Activated B cell treated with CpG ODN at 0.5 μM for 24 hours (primary cell): ENCODE measurements at regions of chr11 and their contacts with region 1.

Region 1: GRCh38 chr11:7442588-7443215 is 42.6 kb upstream of the OLFML1 start:
- DNase-seq: peak; percentile 67
- ATAC-seq: peak; percentile 100
- H3K4me3 Mint-ChIP-seq: no peak overlapping the region
- H3K27ac Mint-ChIP-seq: no peak overlapping the region
- H3K4me1 Mint-ChIP-seq: no peaks in the 10 kb centered on the region
- H3K27me3 Mint-ChIP-seq: no peaks in the 10 kb centered on the region
- CTCF ChIP-seq: peak; percentile 42

Region 2: GRCh38 chr11:6812390-6813005 is 630.2 kb before region 1 on chr11:
- CTCF ChIA-PET with region 1: interaction called, 5 read pairs
- POLR2A ChIA-PET with region 1: no interaction called
- intact Hi-C with region 1: loop called (anchors 1 kb)
- DNase-seq: no peak
- ATAC-seq: peak; percentile 85
- H3K4me3 Mint-ChIP-seq: no peak overlapping the region
- H3K27ac Mint-ChIP-seq: no peak overlapping the region
- H3K4me1 Mint-ChIP-seq: peaks cover 4% of the 10 kb centered on the region
- H3K27me3 Mint-ChIP-seq: peaks cover 9% of the 10 kb centered on the region
- CTCF ChIP-seq: peak; percentile 95

Region 3: DNA sequence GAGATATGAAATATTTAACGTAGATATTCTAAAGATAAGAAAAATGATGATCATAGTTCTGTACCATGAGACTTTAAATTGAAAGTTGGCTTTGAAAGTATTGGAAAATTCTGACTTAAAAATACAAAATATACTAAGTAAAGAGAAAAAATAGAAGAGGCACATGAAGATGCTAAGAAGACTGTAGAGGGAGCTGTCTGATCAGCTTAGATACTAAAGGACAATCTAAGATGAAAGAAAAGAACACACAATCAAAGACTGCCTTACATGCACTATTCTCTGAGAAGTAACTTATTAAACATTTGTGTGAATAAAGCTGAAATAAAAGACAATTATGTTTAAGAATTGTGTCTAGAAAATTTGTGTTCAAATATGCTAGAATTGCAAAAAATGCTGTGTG is 298.8 kb before region 1 on chr11:
- CTCF ChIA-PET with region 1: no interaction called
- POLR2A ChIA-PET with region 1: no interaction called
- intact Hi-C with region 1: loop called (anchors 1 kb)
- DNase-seq: no peak
- ATAC-seq: no peak
- H3K4me3 Mint-ChIP-seq: no peak overlapping the region
- H3K27ac Mint-ChIP-seq: no peak overlapping the region
- H3K4me1 Mint-ChIP-seq: no peaks in the 10 kb centered on the region
- H3K27me3 Mint-ChIP-seq: peaks cover 12% of the 10 kb centered on the region
- CTCF ChIP-seq: no peak

Region 4: DNA sequence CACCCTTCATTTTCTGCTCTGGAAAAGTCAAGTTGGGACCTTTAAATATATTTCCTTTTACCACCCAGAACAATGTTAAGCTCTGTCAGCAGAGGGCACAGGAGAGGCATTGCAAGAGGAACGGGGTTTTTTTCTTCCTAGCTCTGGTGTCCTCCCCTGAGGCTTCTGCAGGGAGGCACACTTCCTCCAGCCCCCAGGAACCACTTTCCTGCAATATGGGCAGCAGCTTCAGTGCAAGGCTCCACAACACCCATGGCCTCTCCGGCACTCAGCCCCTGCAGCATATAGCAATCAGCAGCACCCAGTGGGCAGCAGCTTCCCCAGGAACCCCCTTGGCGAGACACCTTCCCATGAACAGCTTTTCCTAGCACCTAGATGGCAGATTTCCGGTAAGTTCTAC is 89.6 kb before region 1 on chr11:
- CTCF ChIA-PET with region 1: interaction called, 100 read pairs
- POLR2A ChIA-PET with region 1: no interaction called
- intact Hi-C with region 1: loop called (anchors 1 kb)
- DNase-seq: peak; percentile 23
- ATAC-seq: peak; percentile 62
- H3K4me3 Mint-ChIP-seq: no peak overlapping the region
- H3K27ac Mint-ChIP-seq: no peak overlapping the region
- H3K4me1 Mint-ChIP-seq: peaks cover 3% of the 10 kb centered on the region
- H3K27me3 Mint-ChIP-seq: peaks cover 7% of the 10 kb centered on the region
- CTCF ChIP-seq: no peak

Region 5: GRCh38 chr11:7367803-7368202 is 74.9 kb before region 1 on chr11:
- CTCF ChIA-PET with region 1: no interaction called
- POLR2A ChIA-PET with region 1: no interaction called
- intact Hi-C with region 1: no loop called
- DNase-seq: no peak
- ATAC-seq: no peak
- H3K4me3 Mint-ChIP-seq: no peak overlapping the region
- H3K27ac Mint-ChIP-seq: no peak overlapping the region
- H3K4me1 Mint-ChIP-seq: no peaks in the 10 kb centered on the region
- H3K27me3 Mint-ChIP-seq: peaks cover 10% of the 10 kb centered on the region
- CTCF ChIP-seq: no peak

Region 6: DNA sequence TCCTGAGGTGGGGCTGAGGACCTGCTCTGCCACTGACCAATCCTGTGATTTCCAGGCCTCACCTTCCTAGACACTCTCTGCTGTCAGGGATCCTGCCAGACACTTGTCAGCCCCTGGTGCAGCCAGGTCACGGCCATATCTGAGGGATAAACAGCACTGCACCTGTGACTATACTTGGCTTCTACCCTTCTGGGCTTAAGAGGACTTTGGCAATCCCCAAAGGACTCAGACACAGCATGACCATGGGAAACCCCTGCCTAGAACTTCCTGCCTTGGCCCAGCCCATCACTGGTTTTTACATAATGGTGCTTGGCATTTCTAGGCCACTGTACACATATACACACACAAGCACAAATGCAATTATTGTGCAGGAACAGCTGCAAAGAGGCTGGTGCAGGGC is 31.0 kb after region 1 on chr11:
- CTCF ChIA-PET with region 1: no interaction called
- POLR2A ChIA-PET with region 1: no interaction called
- intact Hi-C with region 1: loop called (anchors 2 kb)
- DNase-seq: peak; percentile 31
- ATAC-seq: peak; percentile 99
- H3K4me3 Mint-ChIP-seq: peak overlapping the region; percentile 47
- H3K27ac Mint-ChIP-seq: peak overlapping the region; percentile 74
- H3K4me1 Mint-ChIP-seq: peaks cover 29% of the 10 kb centered on the region
- H3K27me3 Mint-ChIP-seq: no peaks in the 10 kb centered on the region
- CTCF ChIP-seq: no peak

Region 7: GRCh38 chr11:7665473-7666291 is 223.0 kb after region 1 on chr11:
- CTCF ChIA-PET with region 1: interaction called, 13 read pairs
- POLR2A ChIA-PET with region 1: no interaction called
- intact Hi-C with region 1: loop called (anchors 1 kb)
- DNase-seq: peak; percentile 75
- ATAC-seq: peak; percentile 99
- H3K4me3 Mint-ChIP-seq: no peak overlapping the region
- H3K27ac Mint-ChIP-seq: no peak overlapping the region
- H3K4me1 Mint-ChIP-seq: peaks cover 5% of the 10 kb centered on the region
- H3K27me3 Mint-ChIP-seq: no peaks in the 10 kb centered on the region
- CTCF ChIP-seq: peak; percentile 51